PC-9 (cell line): ENCODE measurements at regions of chr6 and their contacts with region 1.

Region 1: DNA sequence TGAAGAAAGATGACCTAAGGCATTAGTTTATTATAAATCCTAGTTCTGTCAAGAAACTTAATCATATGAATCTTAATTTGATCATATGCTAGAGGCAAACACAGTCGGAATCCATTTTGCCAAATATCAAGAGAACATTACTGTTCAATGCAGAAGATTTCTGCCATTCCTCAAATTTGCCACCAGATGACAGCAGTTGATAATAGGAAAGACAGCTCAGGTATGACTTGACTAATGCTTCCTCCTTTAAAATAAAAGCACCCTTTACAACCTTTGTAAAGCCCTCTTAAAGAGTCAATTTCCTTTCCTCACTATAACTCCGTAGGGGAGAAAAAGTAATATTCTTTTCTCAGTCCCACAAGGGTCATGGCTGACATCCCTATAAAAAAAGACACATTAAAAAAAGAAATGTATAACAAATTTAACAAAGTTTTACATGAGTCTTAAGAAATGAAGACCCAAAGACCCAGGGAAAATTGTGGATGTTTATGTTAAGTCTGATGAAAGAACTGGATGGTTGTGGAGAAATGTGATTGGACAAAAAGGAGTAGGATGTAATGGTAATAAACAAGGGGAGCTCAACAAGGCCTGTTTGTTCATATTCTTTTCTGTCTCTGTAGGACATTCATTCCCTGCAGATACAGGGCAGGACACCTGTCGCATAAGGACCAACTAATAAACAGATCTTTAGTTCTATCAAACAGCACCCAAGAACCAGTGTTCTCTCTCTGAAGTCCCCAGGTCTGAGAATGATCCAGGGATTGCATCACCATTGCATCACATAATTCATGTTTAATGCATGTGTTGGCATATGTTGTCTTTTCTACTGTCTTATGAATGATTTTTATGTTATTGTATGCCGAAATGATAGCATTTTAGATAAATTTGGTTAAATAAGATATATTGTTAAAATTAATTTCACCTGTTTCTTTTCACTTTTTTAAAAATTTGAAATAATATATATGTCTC is 23.0 kb upstream of the IL17A start:
- DNase-seq: no peak
- H3K4me3 ChIP-seq: no peak overlapping the region
- H3K27ac ChIP-seq: no peak overlapping the region
- H3K4me1 ChIP-seq: no peaks in the 10 kb centered on the region
- H3K27me3 ChIP-seq: 0 out of 2 replicates have a peak, but pooled peaks cover 4% of the 10 kb centered on the region
- CTCF ChIP-seq: peak; percentile 70

Region 2: DNA sequence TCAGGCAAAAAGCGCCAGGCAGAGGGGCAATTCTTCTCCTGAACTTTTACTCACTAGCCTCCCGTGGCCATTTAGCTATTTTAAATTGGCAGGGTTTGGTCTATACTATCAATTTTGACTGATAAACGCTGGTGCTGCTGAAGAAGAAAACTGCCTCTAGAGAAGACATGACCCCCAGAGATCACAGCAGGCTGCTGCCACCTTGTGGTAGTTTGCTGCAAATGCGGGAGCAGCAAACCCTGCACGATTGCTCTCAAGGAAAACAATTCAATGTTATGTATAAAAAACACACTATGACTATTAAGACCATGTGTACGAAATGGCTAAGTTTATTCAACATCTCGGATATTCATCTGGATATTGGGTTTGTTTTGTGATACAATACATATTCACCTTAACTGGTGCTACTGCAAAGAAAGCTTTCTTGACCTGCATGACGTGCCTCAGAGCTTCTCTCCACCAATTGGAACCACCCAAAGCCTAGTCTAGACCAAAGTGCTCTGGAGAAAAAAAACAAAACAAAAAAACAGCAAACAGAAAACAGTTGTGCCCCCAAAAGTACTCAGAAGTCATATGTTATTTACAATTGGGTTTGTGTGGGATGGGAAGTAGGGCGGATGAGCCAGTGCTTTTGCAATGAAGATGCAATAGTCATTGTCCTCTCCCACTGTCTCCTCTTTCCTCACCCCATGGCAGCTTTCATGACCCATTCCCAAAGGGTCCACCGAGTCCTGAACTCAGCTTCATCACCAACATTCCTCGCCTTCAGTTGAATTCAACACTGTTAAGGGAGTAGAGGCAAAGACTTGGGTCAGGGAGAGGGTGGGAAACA is 100.7 kb after region 1 on chr6:
- CTCF ChIA-PET with region 1: interaction called, 3 read pairs
- POLR2A ChIA-PET with region 1: no interaction called
- intact Hi-C with region 1: loop called (anchors 2 kb)
- DNase-seq: peak; percentile 50 to 56
- H3K4me3 ChIP-seq: no peak overlapping the region
- H3K27ac ChIP-seq: no peak overlapping the region
- H3K4me1 ChIP-seq: no peaks in the 10 kb centered on the region
- H3K27me3 ChIP-seq: no peaks in the 10 kb centered on the region
- CTCF ChIP-seq: peak; percentile 91

Region 3: DNA sequence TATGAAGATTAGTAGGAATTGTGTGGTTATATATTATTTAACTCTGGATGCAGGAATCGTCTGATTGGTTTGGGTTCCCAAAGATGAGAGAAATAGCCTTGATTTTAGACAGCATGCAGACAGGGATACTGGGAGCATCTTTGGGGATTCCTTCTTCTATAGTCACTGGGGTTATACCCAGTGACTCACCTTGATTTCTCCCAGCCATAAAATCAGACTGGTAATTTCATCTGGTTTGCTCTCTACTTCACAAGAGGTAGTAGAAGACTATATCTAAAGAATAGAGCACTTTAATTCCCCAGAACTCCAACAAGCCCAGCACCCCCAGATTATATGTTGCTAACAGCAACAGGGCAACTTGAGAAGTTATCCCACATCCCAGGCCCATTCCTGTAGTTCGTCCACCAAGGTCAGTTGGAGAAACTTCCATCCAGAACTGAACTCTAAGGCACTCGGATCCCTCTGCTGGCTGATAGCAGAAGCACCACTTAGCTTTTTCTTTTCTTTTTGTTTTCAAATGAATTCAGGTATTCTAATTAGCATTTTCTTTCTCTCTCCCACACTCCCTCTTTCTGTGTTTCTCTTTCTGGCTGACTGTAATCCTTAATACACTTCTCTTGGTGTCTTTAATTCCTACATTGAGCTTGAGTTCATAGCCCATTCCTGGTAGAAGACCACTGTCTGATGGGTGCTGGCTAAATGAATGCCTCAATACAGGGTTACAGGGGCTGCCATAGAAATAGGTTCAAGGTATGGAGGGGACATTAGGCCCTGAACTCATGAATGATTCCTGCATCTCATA is 236.5 kb after region 1 on chr6:
- CTCF ChIA-PET with region 1: no interaction called
- POLR2A ChIA-PET with region 1: interaction called, 7 read pairs
- intact Hi-C with region 1: loop called (anchors 2 kb)
- DNase-seq: peak in 1 of 2 experiments; percentile 27
- H3K4me3 ChIP-seq: no peak overlapping the region
- H3K27ac ChIP-seq: no peak overlapping the region
- H3K4me1 ChIP-seq: 0 out of 2 replicates have a peak, but pooled peaks cover 6% of the 10 kb centered on the region
- H3K27me3 ChIP-seq: no peaks in the 10 kb centered on the region
- CTCF ChIP-seq: peak; percentile 95

Region 4: DNA sequence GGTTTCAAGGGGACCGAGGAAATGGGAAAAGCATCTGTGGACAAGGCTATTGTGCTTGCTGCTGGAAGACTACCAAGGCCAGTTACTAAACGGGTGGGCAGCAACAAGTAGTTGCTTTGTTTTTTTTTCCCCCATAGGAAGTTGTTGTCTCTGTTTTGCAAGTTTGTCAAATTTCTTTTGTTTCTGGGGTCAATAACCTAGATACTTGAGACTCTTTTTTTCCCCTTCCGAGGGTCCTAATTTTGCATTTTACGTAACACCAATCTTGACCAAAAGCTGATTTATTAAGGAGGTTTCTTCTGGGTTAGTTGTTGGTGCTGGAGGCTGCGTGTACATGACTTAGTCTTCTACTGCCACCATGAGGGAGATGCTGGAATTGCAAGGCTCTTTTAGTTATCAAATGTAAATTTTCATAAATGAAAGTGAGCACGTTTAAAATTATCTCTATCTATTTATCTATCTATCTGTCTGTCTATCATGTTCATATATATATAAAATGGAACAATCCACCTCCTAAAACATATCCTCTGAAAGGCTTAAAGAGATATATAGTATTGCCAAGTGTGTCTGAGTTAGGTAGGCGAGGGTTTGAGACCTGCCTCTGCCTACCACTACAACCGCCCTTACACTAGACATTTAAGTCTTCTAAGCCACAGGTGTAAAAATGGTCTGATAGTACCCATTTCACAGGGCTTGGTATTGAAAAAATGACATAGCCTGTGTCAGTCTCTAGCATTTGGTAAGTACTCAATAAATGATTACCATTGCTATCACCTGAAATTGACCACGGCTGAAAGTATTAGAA is 1321.5 kb after region 1 on chr6:
- CTCF ChIA-PET with region 1: no interaction called
- POLR2A ChIA-PET with region 1: no interaction called
- intact Hi-C with region 1: loop called (anchors 2 kb)
- DNase-seq: peak in 1 of 2 experiments; percentile 42
- H3K4me3 ChIP-seq: no peak overlapping the region
- H3K27ac ChIP-seq: no peak overlapping the region
- H3K4me1 ChIP-seq: no peaks in the 10 kb centered on the region
- H3K27me3 ChIP-seq: no peaks in the 10 kb centered on the region
- CTCF ChIP-seq: peak; percentile 98